ENCODE measurements at regions of chr21 and their contacts with region 1.

Region 1: GRCh38 chr21:25895565-25896205 is 160.9 kb downstream of the GABPA start:
- DNase-seq: peak in 7 of 9 donors; percentile 18 to 55 (median 42)
- ATAC-seq: peak; percentile 83
- H3K4me3 ChIP-seq: no peak overlapping the region
- H3K4me3 Mint-ChIP-seq: peak overlapping the region in 1 of 10 donors; percentile 22
- H3K27ac ChIP-seq: no peak overlapping the region
- H3K27ac Mint-ChIP-seq: peak overlapping the region in 1 of 9 donors; percentile 43
- H3K4me1 ChIP-seq: peaks cover 0 to 4% of the 10 kb centered on the region in 2 donors
- H3K4me1 Mint-ChIP-seq: peaks cover 6 to 21% (median 17%) of the 10 kb centered on the region in 7 donors
- H3K27me3 ChIP-seq: no peaks in the 10 kb centered on the region
- H3K27me3 Mint-ChIP-seq: no peaks in the 10 kb centered on the region

Region 2: DNA sequence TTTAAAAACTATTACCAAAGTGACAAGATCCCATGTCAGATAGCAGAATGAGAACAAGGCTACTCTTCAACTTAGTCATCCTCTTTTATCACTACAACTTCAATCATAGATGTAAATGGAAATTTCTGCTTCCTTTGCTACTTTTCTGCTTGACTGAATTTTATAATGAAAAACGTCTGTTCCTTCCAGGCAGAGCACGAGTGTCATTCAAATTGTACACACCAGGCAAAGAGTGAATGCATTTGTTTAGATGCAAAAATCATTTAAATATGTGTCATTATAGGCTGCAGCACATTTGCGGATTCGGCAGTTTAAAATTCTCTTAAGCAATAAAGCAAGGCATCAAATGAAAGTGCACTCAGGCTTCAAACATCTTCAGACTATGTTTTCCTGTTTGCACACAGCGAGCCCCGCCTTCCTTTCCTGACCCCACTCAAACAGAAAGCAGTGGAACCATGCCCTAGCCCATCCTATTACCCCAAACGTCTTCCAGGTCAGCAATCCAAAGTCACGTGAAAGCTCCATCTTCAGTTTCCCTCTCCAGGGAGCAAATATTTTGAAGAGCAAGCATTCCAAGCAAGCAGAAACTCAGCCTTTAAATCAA is 175.2 kb after region 1 on chr21:
- CTCF ChIA-PET with region 1: no interaction called
- POLR2A ChIA-PET with region 1: no interaction called
- intact Hi-C with region 1: loop called in 1 of 2 experiments (anchors 5 kb)
- DNase-seq: peak in 7 of 9 donors; percentile 36 to 61 (median 51)
- ATAC-seq: peak; percentile 85
- H3K4me3 ChIP-seq: peak overlapping the region; percentile 24
- H3K4me3 Mint-ChIP-seq: peak overlapping the region; percentile 75 to 94 (median 86)
- H3K27ac ChIP-seq: peak overlapping the region; percentile 57
- H3K27ac Mint-ChIP-seq: peak overlapping the region; percentile 87 to 94 (median 91)
- H3K4me1 ChIP-seq: peaks cover 0 to 38% of the 10 kb centered on the region in 2 donors
- H3K4me1 Mint-ChIP-seq: peaks cover 23 to 69% (median 55%) of the 10 kb centered on the region in 7 donors
- H3K27me3 ChIP-seq: no peaks in the 10 kb centered on the region
- H3K27me3 Mint-ChIP-seq: no peaks in the 10 kb centered on the region

Region 3: DNA sequence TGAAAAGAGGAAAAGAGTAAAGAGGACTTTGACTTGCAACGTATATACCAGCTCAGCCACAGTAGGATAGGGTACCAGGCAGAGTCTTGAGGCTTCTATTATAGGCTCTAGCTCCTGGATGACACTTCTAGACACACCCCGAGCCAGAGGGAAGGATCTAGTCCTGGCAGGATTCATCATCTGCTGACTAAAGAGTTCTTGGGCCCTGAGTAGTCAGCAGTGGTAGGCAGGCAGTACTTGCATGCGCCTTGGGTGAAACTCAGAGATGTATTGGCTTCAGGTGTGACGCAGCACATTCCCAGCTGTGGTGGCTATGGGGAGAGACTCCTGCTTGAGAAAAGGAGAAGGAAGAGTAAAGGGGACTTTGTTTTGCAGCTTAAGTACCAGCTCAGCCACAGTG is 437.2 kb after region 1 on chr21:
- CTCF ChIA-PET with region 1: no interaction called
- POLR2A ChIA-PET with region 1: no interaction called
- intact Hi-C with region 1: loop called in 1 of 2 experiments (anchors 10 kb)
- DNase-seq: no peak
- ATAC-seq: no peak
- H3K4me3 ChIP-seq: no peak overlapping the region
- H3K4me3 Mint-ChIP-seq: no peak overlapping the region
- H3K27ac ChIP-seq: no peak overlapping the region
- H3K27ac Mint-ChIP-seq: no peak overlapping the region
- H3K4me1 ChIP-seq: no peaks in the 10 kb centered on the region
- H3K4me1 Mint-ChIP-seq: no peaks in the 10 kb centered on the region
- H3K27me3 ChIP-seq: no peaks in the 10 kb centered on the region
- H3K27me3 Mint-ChIP-seq: peaks cover 0 to 29% (median 12%) of the 10 kb centered on the region in 5 donors

Region 4: GRCh38 chr21:26715878-26716506 is 820.3 kb after region 1 on chr21:
- CTCF ChIA-PET with region 1: interaction called, 3 read pairs
- POLR2A ChIA-PET with region 1: no interaction called
- intact Hi-C with region 1: loop called in 1 of 2 experiments (anchors 1 kb)
- DNase-seq: peak in 4 of 9 donors; percentile 4 to 15 (median 5)
- ATAC-seq: peak; percentile 46
- H3K4me3 ChIP-seq: no peak overlapping the region
- H3K4me3 Mint-ChIP-seq: no peak overlapping the region
- H3K27ac ChIP-seq: no peak overlapping the region
- H3K27ac Mint-ChIP-seq: no peak overlapping the region
- H3K4me1 ChIP-seq: no peaks in the 10 kb centered on the region
- H3K4me1 Mint-ChIP-seq: no peaks in the 10 kb centered on the region
- H3K27me3 ChIP-seq: no peaks in the 10 kb centered on the region
- H3K27me3 Mint-ChIP-seq: peaks cover 2 to 14% (median 6%) of the 10 kb centered on the region in 5 donors

Measured in naive thymus-derived CD4-positive, alpha-beta T cell (primary cell).